Ascending aorta (tissue), 2 donors: ENCODE measurements at regions of chr1 and their contacts with region 1.

Region 1: DNA sequence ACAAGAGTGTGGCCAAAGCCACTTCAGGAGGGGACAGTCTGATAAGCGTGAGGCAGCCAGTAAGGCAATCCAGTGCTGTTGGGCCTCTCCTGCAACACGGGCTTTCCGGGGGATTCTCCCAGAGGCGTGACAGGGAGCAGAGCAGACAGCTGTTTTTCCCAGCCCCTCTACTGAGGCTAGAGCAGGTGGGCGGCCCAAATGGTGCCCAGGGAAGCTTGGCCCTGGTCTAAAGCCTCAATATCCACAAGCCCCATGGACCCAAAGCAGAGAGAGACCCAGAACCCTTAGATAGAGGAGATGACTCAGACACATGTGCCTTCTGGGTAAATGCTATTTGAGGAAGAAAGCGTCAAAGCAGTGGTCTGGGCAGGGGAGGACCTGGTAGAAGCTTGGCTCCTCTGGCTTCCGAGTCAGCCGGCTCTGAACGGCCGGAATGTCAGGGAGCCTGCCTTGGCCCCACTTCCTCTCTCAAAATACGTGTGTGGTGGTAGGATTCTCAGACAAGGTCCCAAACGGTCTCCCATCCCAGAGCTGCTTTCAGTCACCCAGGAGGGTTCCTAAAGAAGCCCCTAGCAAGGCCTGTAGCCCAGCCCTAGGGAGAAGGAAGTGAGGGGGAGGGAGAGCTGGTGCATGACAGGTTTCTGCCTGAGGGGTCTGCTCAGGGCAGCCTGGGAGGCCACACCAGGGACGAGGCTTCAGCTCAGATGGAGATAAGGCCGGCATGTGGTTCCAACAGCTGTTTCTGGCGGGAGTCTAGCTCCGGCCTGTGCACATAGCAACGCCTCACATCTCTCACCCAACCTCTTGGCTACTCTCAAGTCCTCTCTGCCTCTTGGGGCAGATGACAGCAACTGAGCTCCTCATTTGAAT is 28.8 kb downstream of the PIK3C2B start:
- DNase-seq: peak in 1 of 2 donors; percentile 44
- H3K4me3 ChIP-seq: peak overlapping the region; percentile 18 to 50
- H3K27ac ChIP-seq: peak overlapping the region; percentile 95 to 97
- H3K4me1 ChIP-seq: peaks cover 43 to 68% of the 10 kb centered on the region in 2 donors
- H3K27me3 ChIP-seq: no peaks in the 10 kb centered on the region
- CTCF ChIP-seq: no peak

Region 2: GRCh38 chr1:204446370-204447111 is 19.2 kb before region 1 on chr1:
- intact Hi-C with region 1: loop called (anchors 2 kb)
- DNase-seq: peak in 1 of 2 donors; percentile 85
- H3K4me3 ChIP-seq: no peak overlapping the region
- H3K27ac ChIP-seq: peak overlapping the region; percentile 19 to 58
- H3K4me1 ChIP-seq: peaks cover 12 to 43% of the 10 kb centered on the region in 2 donors
- H3K27me3 ChIP-seq: no peaks in the 10 kb centered on the region
- CTCF ChIP-seq: peak; percentile 69 to 84 (median 72)

Region 3: DNA sequence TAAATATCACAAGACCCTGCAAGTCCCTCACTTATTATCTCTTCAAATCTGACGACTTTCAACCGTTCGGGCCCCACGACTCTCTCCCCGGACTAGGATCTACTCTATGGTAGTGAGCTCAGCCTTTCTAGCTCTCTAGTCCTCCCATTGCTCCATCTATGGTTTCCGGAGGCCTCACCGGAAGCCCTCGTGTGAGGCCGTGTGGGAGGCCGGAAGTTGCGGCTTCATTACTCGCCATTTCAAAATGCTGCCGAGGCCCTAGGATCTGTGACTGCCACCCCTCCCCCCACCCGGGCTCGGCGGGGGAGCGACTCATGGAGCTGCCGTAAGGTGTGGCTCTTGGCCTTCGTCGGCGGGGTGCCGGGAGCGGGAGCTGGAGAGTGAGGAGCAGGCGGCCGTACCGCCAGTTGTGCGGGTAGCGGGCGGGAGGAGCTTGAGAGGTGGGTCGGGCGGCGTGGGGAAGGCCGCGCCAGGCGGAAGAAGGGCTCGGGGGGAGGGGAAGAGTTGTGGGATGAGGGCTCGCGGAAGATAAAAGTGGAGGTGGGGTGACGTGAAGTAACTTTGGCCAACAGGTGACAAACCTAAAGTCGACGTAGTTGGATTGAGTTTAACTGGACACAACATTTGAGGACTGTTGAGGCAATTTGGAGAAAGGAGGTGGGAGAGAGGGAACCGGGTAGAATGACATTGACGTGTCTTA is 50.5 kb after region 1 on chr1 and contains the start of gene MDM4:
- intact Hi-C with region 1: no loop called
- DNase-seq: peak; percentile 83 to 97
- H3K4me3 ChIP-seq: peak within 1 kb of the TSS; percentile 82 to 97
- H3K27ac ChIP-seq: peak within 1 kb of the TSS; percentile 90 to 92
- H3K4me1 ChIP-seq: peaks cover 7 to 16% of the 10 kb centered on the region in 2 donors
- H3K27me3 ChIP-seq: no peaks in the 10 kb centered on the region
- CTCF ChIP-seq: no peak
- total RNA-seq, gene MDM4: 9.9 TPM